Cardiac septum (tissue), 1 donor: ENCODE measurements at regions of chr16 and their contacts with region 1.

Region 1: GRCh38 chr16:67159593-67160406 is at the starts of genes FBXL8 and TRADD:
- DNase-seq: peak; percentile 92
- total RNA-seq, gene FBXL8: 9.5 TPM
- total RNA-seq, gene TRADD: 11.0 TPM

Region 2: GRCh38 chr16:66444049-66444481 is 715.7 kb before region 1 on chr16:
- intact Hi-C with region 1: no loop called
- DNase-seq: peak; percentile 59

Region 3: DNA sequence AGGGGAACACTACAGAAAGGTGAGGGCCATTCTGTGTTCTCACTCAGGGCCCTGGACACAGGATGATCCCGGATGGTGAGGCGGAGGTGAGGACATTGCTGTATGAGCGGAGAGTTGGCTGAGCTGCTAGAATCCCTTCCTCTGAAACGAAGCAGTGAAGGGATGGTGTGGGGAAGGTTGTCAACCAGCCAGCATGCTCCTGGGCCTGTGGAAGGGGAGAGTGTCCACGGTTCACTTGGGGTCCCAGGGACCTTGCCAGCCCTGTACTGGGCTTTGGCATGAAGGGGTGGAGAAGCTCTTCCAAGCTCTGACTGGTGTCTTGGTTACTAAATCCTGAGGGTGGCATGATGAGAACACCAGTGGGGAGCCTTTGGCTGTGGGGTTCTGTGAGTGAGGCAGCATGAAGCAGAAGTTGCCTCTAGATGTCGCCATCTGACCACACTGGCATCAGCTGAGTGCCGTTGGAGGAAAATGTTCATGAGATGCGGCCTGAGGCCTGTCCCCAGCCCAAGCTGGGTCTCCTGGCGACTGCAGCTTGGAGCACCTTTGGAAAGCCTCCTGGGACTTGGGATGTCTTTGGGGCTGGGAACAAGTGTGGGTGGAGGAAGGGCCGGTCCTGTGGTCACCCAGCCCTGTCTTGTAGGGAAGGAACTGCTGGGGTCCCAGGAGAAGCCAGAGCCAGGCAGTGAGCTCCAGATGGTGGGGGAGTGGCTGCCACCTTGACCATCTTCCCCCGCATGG is 264.7 kb before region 1 on chr16:
- intact Hi-C with region 1: loop called (anchors 5 kb)
- DNase-seq: no peak

Region 4: DNA sequence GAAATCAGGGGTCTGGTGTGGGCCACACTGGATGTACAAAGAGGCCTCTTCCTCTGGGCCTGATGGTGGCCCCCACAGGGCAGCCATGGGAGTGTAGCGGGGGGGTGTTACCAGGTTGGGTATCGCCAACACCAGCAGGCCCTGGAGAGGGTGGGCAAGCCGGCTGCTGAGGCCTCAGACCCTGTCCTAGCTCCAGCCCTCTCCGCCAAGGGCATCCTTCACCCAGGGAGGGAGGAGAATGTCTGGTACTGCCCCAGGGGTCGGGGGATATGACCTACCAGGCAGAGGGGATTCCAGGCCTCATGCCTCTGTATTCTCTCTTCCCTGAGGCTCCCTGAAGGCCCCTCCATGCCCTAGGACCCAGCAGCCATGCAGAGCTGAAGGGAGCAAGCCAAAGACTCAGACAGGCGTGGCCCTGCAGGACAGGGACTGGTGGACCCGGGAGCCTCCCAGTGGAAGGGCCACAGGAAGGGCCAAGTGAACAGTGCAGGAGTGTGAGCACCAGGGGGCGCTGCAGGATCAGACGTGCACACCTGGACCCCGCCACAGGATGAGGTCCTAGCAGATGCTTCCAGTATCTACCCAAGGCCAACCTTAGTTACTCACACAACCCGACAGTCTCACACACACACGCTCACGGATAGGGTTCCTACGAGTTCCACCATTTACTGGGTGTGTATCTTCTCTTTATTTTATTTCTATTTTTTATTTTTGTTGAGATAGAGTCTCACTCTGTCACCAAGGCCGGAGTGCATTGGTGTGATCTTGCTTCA is 182.3 kb before region 1 on chr16:
- intact Hi-C with region 1: loop called (anchors 2 kb)
- DNase-seq: peak; percentile 94

Region 5: GRCh38 chr16:67017810-67018488 is 141.9 kb before region 1 on chr16:
- intact Hi-C with region 1: loop called (anchors 5 kb)
- DNase-seq: peak; percentile 77

Region 6: DNA sequence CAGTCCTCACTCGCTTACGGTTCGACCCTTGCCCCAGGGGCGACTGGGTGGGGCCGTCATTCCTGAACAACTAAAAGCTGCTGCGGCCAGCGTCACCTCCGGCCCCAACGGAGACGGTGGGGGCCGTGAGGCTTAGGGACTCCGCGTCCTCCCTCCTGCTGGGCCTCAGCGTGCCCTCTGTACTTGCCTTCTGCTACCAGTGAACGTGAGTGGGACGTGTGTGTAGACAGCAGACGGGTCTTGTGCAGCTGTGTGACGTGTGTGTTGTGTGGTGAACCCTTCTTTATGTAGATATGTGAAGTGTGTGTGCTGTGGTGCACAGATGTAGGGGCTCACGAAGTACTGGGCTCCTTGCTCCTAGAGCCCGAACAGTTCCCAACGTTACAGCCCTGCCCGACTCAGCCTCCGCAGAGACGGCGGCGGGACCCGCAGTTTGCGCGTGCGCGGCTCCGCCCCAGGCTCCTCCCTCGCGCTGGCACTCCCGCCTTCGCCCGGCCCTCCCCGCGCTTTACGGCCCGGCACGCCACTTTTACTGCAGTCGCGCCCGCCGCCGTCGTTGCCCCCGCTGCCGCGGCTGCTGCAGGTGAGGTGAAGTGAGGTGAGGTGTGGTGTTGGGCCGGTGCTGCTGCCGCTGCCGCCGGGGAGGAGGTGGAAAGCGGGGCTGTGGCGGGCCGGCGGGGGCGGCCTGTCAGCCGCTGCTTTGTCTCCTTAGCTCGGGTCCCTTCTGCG is 50.2 kb before region 1 on chr16 and contains the start of gene PHAF1:
- intact Hi-C with region 1: loop called (anchors 5 kb)
- DNase-seq: peak; percentile 98
- total RNA-seq, gene PHAF1: 8.8 TPM

Region 7: GRCh38 chr16:67183627-67184328 is 24.0 kb after region 1 on chr16 and contains the start of gene MATCAP1:
- intact Hi-C with region 1: loop called (anchors 2 kb)
- DNase-seq: peak; percentile 96
- total RNA-seq, gene MATCAP1: 22.2 TPM

Region 8: GRCh38 chr16:67246934-67247697 is 87.3 kb after region 1 on chr16 and contains the start of gene FHOD1:
- intact Hi-C with region 1: no loop called
- DNase-seq: peak; percentile 100
- total RNA-seq, gene FHOD1: 33.4 TPM